ENCODE measurements at regions of chr16 and their contacts with region 1.

Region 1: DNA sequence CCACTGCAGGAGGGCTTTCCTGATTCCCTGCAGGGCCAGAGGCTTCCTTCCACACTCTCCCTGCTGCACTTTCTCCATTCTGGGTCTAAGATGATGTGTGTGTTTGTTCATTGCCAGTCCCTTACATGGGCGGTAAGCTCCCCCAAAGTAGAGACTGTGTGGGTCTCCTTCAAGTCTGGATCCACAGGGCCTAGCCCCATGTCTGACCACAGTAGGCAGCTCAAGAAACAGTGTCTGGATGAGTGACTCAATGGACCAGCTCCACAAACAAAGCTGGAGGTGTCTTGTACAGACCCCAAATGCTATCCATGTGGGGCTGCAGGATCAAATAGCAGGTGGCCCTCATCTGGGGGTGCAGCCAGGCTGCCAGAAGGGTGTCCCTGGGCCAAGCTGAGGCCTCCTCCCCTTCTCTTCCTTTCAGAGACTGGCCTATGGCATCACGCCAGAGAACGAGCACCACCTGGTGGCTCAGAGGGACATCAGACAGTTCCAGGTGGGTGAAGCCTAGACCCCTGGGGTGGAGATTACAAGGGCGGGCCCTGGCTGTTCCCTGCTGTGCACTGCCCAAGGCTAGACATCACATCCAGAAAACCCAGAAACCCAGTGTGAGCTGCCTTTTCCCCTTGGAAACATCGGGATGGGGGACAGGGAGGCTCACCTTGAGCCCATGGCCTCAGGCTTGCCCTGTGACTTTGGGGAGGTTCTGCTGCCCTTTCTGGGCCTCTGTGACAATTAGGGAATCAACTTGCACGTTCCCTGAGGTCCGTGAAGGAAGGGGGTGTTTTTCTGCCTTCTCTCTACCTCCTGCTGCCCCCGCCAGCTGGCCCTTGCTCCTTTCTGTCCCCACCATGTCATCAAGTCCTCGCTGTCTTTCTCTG is 45.9 kb downstream of the SLC6A2 start:
- DNase-seq: peak; percentile 7 to 35
- ATAC-seq: peak; percentile 58 to 70
- H3K4me3 ChIP-seq: no peak overlapping the region
- H3K27ac ChIP-seq: no peak overlapping the region
- H3K4me1 ChIP-seq: no peaks in the 10 kb centered on the region
- H3K27me3 ChIP-seq: no peaks in the 10 kb centered on the region
- CTCF ChIP-seq: peak; percentile 57 to 76 (median 68)
- POLR2A ChIP-seq: no peak

Region 2: GRCh38 chr16:55480228-55480661 is 221.4 kb before region 1 on chr16:
- in situ Hi-C with region 1: no loop called
- intact Hi-C with region 1: no loop called
- DNase-seq: peak; percentile 58 to 79
- ATAC-seq: peak; percentile 44 to 45
- H3K4me3 ChIP-seq: peak overlapping the region; percentile 47 to 60 (median 54)
- H3K27ac ChIP-seq: peak overlapping the region; percentile 72 to 80 (median 74)
- H3K4me1 ChIP-seq: peaks cover 0 to 4% of the 10 kb centered on the region in 2 donors
- H3K27me3 ChIP-seq: peaks cover 12 to 26% (median 14%) of the 10 kb centered on the region in 3 donors
- CTCF ChIP-seq: no peak
- POLR2A ChIP-seq: peak; percentile 18 to 61

Region 3: GRCh38 chr16:55655860-55656695 is 45.6 kb before region 1 on chr16 and contains the start of gene SLC6A2:
- in situ Hi-C with region 1: loop called in 1 of 4 experiments (anchors 10 kb)
- intact Hi-C with region 1: loop called (anchors 2 kb)
- DNase-seq: no peak
- ATAC-seq: peak in 1 of 2 donors; percentile 21
- H3K4me3 ChIP-seq: peak within 1 kb of the TSS; percentile 13 to 32 (median 24)
- H3K27ac ChIP-seq: no peak within 1 kb of the TSS
- H3K4me1 ChIP-seq: no peaks in the 10 kb centered on the region
- H3K27me3 ChIP-seq: peaks cover 18 to 45% (median 20%) of the 10 kb centered on the region in 3 donors
- CTCF ChIP-seq: peak in 2 of 5 experiments; percentile 22 to 32
- POLR2A ChIP-seq: no peak
- total RNA-seq, gene SLC6A2: not detected

Measured in gastrocnemius medialis (tissue), 4 donors.